ENCODE measurements at regions of chr16 and their contacts with region 1.

Region 1: DNA sequence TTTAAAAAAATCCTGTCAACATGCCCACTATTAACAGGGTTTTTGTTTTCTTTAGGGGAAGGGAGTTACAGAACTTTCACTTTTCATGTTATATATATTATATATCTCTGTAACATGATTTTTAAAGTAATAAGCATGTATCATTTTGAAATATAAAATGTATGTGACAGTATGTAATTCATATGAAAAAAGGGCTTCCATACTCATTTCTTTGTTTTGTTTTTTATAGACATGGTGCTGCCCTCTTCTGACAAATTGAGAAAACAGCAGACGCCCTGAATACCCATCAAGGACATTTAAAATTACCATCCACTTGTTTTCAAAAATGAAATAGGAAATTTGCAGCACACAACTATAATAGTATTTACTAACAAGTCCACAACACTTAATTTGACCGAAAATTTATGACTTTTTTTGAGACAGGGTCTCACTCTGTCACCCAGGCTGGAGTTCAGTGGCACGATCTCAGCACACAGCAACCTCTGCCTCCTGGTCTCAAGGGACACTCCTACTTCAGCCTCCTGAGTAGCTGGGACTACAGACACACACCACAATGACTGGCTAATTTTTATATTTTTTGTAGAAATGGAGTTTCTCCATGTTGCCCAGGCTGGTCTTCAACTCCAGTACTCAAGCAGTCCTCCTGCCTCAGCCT is 30.4 kb downstream of the CFDP1 start:
- ATAC-seq: peak in 3 of 8 experiments; percentile 28 to 46 (median 34)
- H3K4me3 ChIP-seq: no peak overlapping the region
- H3K27ac ChIP-seq: no peak overlapping the region
- H3K4me1 ChIP-seq: no peaks in the 10 kb centered on the region

Region 2: GRCh38 chr16:75218256-75219070 is 184.5 kb before region 1 on chr16 and contains the start of gene CTRB1:
- in situ Hi-C with region 1: loop called in 7 of 9 experiments (anchors 10 to 25 kb)
- ATAC-seq: peak in 1 of 8 experiments; percentile 36
- H3K4me3 ChIP-seq: no peak within 1 kb of the TSS
- H3K27ac ChIP-seq: no peak within 1 kb of the TSS
- H3K4me1 ChIP-seq: no peaks in the 10 kb centered on the region
- total RNA-seq, gene CTRB1: 0.11 to 1.5 (median 0.41) TPM

Region 3: DNA sequence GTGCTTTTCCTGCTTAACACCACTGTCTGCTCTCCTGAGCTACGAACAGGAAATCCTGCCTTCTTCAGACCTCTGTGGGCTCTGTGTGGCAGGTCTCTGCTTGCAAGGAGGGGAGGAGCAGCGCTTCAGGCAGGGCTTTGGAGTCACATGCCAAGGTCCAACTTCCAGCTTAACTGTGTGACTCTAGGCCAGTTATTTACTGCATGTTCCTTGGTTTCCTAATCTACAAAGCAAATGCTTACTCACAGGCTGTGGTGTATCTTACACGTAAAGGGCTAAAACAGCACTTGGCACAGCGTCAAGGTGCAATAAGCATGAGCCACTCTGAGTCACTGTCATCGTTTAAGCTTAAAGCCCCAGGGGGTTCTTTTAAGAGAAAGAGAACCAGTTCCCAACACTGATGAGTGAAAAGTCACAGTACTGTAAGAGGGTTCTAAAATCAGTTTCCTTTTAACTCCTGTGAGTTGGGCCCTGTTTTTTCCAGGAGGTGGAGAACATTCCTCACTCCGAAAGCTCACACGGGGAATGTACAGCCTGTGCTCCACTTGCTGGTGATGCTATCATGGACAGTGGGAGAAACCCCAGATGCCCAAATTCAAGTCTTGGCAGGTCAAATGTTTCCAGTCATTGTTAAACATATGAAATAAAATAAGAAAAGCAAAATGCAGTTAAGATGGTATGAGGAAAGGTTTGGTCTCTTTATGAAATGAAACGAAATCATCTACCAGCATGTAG is 97.4 kb before region 1 on chr16:
- in situ Hi-C with region 1: no loop called
- ATAC-seq: peak; percentile 36 to 94 (median 87)
- H3K4me3 ChIP-seq: no peak overlapping the region
- H3K27ac ChIP-seq: no peak overlapping the region
- H3K4me1 ChIP-seq: no peaks in the 10 kb centered on the region

Measured in motor neuron (in vitro differentiated cells).